PC-9 (cell line): ENCODE measurements at regions of chr5 and their contacts with region 1.

Region 1: DNA sequence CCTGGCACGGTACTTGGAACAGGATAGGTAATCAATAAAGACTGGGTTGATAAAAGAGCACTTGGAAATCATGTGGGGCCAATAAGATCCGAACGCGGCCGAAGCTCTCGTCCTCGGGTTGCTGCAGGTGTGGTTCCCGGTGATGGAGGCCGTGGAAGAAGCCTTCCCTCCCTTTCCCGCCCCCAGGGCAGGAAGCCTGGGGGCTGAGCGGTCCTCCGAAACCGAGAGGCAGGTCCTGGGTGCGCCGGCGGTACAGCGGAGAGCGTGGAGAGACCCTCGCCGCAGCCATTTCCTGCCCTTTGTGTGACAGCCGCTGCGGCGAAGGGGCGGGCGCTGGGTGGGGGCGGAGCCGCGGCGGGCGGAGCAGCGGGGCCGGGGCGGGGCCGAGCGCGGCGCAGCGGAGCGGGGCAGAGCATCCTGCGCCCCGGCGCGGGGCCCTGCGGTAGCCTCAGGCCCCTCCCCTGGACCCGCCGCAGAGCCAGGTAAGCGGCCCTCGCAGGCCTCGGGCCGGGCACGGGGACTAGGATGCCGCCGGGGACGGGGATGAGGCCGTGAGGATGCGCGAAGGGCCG is at the start of gene CYFIP2:
- DNase-seq: peak in 1 of 2 experiments; percentile 10
- H3K4me3 ChIP-seq: no peak within 1 kb of the TSS
- H3K27ac ChIP-seq: no peak within 1 kb of the TSS
- H3K4me1 ChIP-seq: no peaks in the 10 kb centered on the region
- H3K27me3 ChIP-seq: peaks cover 30% of the 10 kb centered on the region
- CTCF ChIP-seq: no peak
- total RNA-seq, gene CYFIP2: not detected in 2 replicates

Region 2: DNA sequence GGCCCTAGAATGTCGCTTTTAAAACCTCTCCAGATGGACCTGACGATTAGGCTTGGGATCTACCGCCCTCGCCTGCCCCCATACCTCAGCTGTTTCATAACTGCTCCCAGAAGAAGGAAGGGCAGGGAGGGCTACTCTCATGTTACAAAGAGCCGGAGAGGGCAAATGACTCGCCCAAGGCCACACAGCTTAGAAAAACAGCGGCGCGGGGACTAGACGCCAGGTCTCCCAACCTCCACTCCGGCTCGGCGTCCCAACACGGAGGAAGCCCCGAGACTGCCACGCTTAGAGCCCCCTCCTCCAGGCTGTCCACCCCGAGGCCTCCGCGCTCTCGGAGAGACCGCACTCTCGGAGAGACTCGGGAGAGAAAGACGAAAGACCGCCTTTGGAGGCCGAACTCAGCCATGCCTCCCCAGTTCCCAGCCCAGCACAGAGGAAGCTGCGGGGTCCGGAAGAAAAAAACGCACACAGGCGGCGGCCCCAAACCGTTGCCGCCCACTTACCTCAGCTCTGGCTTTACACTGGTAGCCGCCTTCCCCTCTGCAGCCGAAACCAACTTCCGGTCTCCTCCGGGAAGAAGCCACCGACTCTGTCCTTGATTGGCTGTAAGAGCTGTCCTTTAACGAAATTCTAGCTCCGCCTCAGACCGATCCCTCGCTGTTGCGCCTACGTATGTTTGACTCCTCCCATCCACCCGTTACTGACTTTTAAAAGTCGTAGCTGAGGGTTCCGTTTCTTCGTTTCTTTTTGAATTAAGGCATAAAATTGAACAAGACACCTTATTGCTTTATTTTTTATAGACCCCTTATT is 123.3 kb before region 1 on chr5 and contains the start of gene MED7:
- CTCF ChIA-PET with region 1: no interaction called
- POLR2A ChIA-PET with region 1: no interaction called
- intact Hi-C with region 1: loop called (anchors 10 kb)
- DNase-seq: peak; percentile 93
- H3K4me3 ChIP-seq: peak within 1 kb of the TSS; percentile 69
- H3K27ac ChIP-seq: peak within 1 kb of the TSS; percentile 57
- H3K4me1 ChIP-seq: peaks cover 11% of the 10 kb centered on the region
- H3K27me3 ChIP-seq: peaks cover 5% of the 10 kb centered on the region; the same call in 1 of the 2 replicates
- CTCF ChIP-seq: no peak
- total RNA-seq, gene MED7: 9.4 and 11.8 TPM in 2 replicates

Region 3: GRCh38 chr5:157222506-157223230 is 43.1 kb before region 1 on chr5:
- CTCF ChIA-PET with region 1: no interaction called
- POLR2A ChIA-PET with region 1: no interaction called
- intact Hi-C with region 1: no loop called
- DNase-seq: no peak
- H3K4me3 ChIP-seq: no peak overlapping the region
- H3K27ac ChIP-seq: no peak overlapping the region
- H3K4me1 ChIP-seq: no peaks in the 10 kb centered on the region
- H3K27me3 ChIP-seq: peaks cover 18% of the 10 kb centered on the region
- CTCF ChIP-seq: no peak